Activated CD4-positive, alpha-beta memory T cell treated with anti-CD3 and anti-CD28 coated beads for 36 hours (primary cell): ENCODE measurements at regions of chr7 and their contacts with region 1.

Region 1: GRCh38 chr7:103573479-103574058 is 127.6 kb upstream of the SLC26A5 start:
- DNase-seq: no peak
- H3K4me3 Mint-ChIP-seq: no peak overlapping the region
- H3K27ac Mint-ChIP-seq: no peak overlapping the region
- H3K4me1 Mint-ChIP-seq: no peaks in the 10 kb centered on the region
- H3K27me3 Mint-ChIP-seq: peaks cover 3% of the 10 kb centered on the region

Region 2: GRCh38 chr7:103660455-103661371 is 87.1 kb after region 1 on chr7:
- CTCF ChIA-PET with region 1: no interaction called
- POLR2A ChIA-PET with region 1: no interaction called
- intact Hi-C with region 1: no loop called
- DNase-seq: no peak
- H3K4me3 Mint-ChIP-seq: no peak overlapping the region
- H3K27ac Mint-ChIP-seq: no peak overlapping the region
- H3K4me1 Mint-ChIP-seq: no peaks in the 10 kb centered on the region
- H3K27me3 Mint-ChIP-seq: peaks cover 1% of the 10 kb centered on the region

Region 3: DNA sequence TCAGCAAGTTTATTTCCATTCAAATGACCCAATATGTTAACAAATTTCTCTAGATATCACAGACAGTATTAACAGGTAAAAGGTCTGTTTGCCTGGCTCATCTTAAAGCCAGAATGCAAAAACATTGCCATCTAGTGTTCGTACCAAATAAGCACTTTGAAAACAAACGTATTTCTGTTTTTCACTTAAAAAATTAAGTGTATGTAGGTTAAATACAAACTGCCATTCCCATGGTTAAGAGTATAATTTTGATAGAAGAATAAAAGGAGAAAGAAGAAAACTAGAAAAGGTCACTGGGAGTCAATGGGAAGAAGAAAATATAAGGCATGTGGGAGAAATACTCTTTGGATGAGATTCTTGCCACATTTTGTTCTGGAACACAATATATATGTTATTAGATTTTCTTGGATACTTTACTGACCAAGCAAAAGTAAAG is 583.3 kb after region 1 on chr7:
- CTCF ChIA-PET with region 1: interaction called, 6 read pairs
- POLR2A ChIA-PET with region 1: no interaction called
- intact Hi-C with region 1: loop called (anchors 1 kb)
- DNase-seq: no peak
- H3K4me3 Mint-ChIP-seq: no peak overlapping the region
- H3K27ac Mint-ChIP-seq: no peak overlapping the region
- H3K4me1 Mint-ChIP-seq: no peaks in the 10 kb centered on the region
- H3K27me3 Mint-ChIP-seq: no peaks in the 10 kb centered on the region

Region 4: GRCh38 chr7:104231054-104232046 is 657.8 kb after region 1 on chr7:
- CTCF ChIA-PET with region 1: interaction called, 4 read pairs
- POLR2A ChIA-PET with region 1: no interaction called
- intact Hi-C with region 1: loop called (anchors 10 kb)
- DNase-seq: peak; percentile 46
- H3K4me3 Mint-ChIP-seq: no peak overlapping the region
- H3K27ac Mint-ChIP-seq: no peak overlapping the region
- H3K4me1 Mint-ChIP-seq: no peaks in the 10 kb centered on the region
- H3K27me3 Mint-ChIP-seq: peaks cover 10% of the 10 kb centered on the region

Region 5: GRCh38 chr7:104267701-104268368 is 694.3 kb after region 1 on chr7:
- CTCF ChIA-PET with region 1: interaction called, 5 read pairs
- POLR2A ChIA-PET with region 1: no interaction called
- intact Hi-C with region 1: loop called (anchors 5 kb)
- DNase-seq: no peak
- H3K4me3 Mint-ChIP-seq: no peak overlapping the region
- H3K27ac Mint-ChIP-seq: no peak overlapping the region
- H3K4me1 Mint-ChIP-seq: no peaks in the 10 kb centered on the region
- H3K27me3 Mint-ChIP-seq: peaks cover 11% of the 10 kb centered on the region